Posterior vena cava (tissue), 2 donors: ENCODE measurements at regions of chr16 and their contacts with region 1.

Region 1: DNA sequence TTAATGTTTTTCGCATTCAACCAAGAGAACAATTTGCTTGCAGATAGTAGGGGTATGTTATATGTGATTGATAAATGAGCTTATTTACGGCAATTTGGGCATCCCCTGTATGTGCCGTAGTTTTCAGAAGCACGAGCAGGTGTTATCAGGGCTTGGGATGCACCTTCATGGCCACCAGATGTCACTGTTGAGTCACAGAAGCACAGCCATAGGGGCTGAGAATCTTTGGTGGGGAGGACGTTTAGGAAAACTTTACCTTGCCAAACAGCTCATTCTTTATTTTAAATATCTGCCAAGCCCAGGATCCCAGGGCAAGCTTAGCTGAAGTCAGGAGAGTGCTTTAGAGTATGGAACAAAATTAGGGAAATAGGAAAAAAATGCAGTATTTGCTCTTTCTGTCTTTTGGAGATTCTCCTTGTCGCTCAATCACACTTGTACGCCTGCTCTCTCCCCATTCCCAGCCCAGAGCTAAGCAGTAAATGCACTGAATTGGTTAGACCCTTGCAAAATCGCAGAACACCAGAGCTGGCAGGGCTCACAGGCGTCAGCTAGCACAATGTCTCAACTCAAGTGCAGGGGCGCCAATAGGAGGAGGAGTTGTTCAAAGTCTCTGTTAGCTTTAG is 93.6 kb upstream of the MPHOSPH6 start:
- DNase-seq: no peak

Region 2: DNA sequence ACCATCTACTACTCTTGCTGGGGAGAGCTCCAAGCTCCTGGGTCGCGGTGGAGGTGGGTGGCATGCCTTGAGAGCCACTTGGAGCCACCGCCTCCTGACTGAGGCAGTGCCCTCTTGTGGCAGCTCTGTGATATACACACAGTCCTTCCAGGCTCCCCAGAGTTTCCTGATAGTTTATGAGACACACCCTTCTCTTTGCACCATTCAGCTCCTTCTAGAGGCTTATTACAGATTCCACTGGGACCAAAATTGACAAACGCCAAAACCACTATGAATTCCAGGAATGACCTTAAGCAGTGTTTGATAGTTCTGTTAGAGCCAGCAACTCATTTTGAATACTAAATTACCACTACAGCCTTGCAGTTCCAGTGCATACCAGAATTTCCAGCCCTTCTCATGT is 193.1 kb after region 1 on chr16:
- intact Hi-C with region 1: loop called in 1 of 2 experiments (anchors 10 kb)
- DNase-seq: no peak